ENCODE measurements at regions of chr1 and their contacts with region 1.

Region 1: GRCh38 chr1:174051956-174052355 is 29.8 kb upstream of the RC3H1 start:
- DNase-seq: no peak
- ATAC-seq: no peak
- H3K4me3 ChIP-seq: no peak overlapping the region
- H3K27ac ChIP-seq: no peak overlapping the region
- H3K4me1 ChIP-seq: no peaks in the 10 kb centered on the region
- H3K27me3 ChIP-seq: peaks cover 0 to 4% of the 10 kb centered on the region in 2 experiments; a peak in 1 of 5 replicates
- CTCF ChIP-seq: no peak
- EP300 ChIP-seq: no peak
- POLR2A ChIP-seq: no peak
- RAD21 ChIP-seq: no peak

Region 2: GRCh38 chr1:174114788-174115448 is 63.0 kb after region 1 on chr1:
- CTCF ChIA-PET with region 1: no interaction called
- POLR2A ChIA-PET with region 1: no interaction called
- in situ Hi-C with region 1: loop called (anchors 10 kb)
- intact Hi-C with region 1: no loop called
- DNase-seq: peak; percentile 83
- ATAC-seq: peak; percentile 100
- H3K4me3 ChIP-seq: peak overlapping the region in 1 of 3 experiments; percentile 38; a peak in 1 of 6 replicates
- H3K27ac ChIP-seq: no peak overlapping the region
- H3K4me1 ChIP-seq: peaks cover 20% of the 10 kb centered on the region
- H3K27me3 ChIP-seq: no peaks in the 10 kb centered on the region
- CTCF ChIP-seq: peak; percentile 80
- EP300 ChIP-seq: 0 out of 4 replicates have a peak, but pooled peaks of 1 of the 2 experiments have one; percentile 32
- POLR2A ChIP-seq: no peak
- RAD21 ChIP-seq: 0 out of 2 replicates have a peak, but pooled peaks have one; percentile 37

Measured in HepG2 (cell line).